GM13976 (cell line): ENCODE measurements at regions of chr11 and their contacts with region 1.

Region 1: GRCh38 chr11:96464700-96465307 is 75.0 kb downstream of the JRKL start:
- DNase-seq: peak; percentile 70
- CTCF ChIP-seq: peak; percentile 54

Region 2: DNA sequence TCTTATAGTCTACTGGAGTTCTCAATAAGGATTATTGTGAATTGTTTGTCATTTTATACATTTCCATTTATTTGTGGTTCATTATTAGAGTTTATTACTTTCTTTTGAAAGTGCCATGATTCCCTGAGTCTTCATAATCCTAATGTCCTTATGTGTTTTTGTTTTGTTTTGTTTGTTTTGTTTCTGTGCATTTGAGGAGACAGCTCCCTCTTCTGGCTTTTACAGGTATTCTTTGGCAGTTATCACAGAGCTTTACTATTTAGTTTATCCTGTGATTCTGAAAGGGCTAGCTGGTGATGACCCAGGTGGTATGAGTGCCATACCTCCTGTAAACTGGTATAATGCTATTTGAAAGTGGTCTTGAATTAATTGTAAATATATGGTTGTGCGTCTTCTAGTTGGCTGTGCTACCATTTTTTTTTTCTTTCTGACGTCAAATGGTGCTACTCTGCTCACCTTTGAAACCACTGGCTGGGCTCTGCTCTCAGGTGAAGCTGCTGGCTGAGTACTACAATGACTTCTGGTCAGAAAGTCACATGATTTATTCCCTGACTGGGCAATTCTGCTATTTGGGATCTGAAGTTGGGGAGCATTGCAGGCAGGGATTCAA is 676.2 kb after region 1 on chr11:
- in situ Hi-C with region 1: loop called (anchors 25 kb)
- DNase-seq: no peak
- CTCF ChIP-seq: peak; percentile 56